ENCODE measurements at regions of chr3 and their contacts with region 1.

Region 1: GRCh38 chr3:149717391-149718056 is 34.8 kb downstream of the COMMD2 start:
- DNase-seq: no peak
- ATAC-seq: peak; percentile 87
- H3K4me3 ChIP-seq: no peak overlapping the region
- H3K27ac ChIP-seq: no peak overlapping the region
- H3K4me1 ChIP-seq: no peaks in the 10 kb centered on the region
- H3K27me3 ChIP-seq: no peaks in the 10 kb centered on the region
- CTCF ChIP-seq: peak; percentile 64 to 70 (median 66)
- EP300 ChIP-seq: no peak
- POLR2A ChIP-seq: no peak
- RAD21 ChIP-seq: peak; percentile 78

Region 2: DNA sequence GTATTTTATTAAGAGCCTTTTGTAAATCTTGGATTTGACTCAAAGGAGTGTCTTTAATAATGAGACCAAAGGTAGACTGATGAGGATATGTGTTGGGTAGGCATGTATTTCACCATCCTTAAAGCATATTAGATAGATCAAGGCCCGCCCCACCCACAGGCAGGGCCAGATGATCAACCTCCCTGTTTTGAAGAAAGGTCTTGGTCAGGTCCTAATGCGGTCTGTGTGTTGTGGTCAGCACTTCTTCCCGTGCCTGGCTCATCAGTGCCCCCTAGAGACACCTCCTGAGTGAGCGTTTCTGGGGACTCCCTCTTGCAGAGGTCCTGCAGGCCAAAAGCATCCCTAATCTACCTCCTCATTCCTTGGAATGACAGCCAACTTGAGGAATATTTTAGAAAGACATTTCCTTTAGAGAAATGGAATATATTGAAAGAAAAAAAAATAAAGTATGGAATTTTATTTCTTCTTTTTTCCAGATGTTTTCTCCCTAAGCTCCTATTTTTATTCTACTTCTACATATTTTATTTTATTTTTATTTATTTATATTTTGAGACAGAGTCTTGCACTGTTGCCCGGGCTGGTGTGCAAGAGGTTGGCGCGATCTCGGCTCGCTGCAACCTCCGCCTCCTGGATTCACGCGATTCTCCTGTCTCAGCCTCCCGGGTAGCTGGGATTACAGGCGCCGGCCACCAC is 237.1 kb before region 1 on chr3:
- CTCF ChIA-PET with region 1: no interaction called
- POLR2A ChIA-PET with region 1: no interaction called
- RAD21 ChIA-PET with region 1: no interaction called
- SMC1A ChIA-PET with region 1: no interaction called
- in situ Hi-C with region 1: no loop called
- intact Hi-C with region 1: no loop called
- DNase-seq: peak; percentile 52
- ATAC-seq: peak; percentile 99
- H3K4me3 ChIP-seq: no peak overlapping the region
- H3K27ac ChIP-seq: no peak overlapping the region
- H3K4me1 ChIP-seq: no peaks in the 10 kb centered on the region
- H3K27me3 ChIP-seq: no peaks in the 10 kb centered on the region
- CTCF ChIP-seq: peak; percentile 86 to 95 (median 93)
- EP300 ChIP-seq: no peak
- POLR2A ChIP-seq: no peak
- RAD21 ChIP-seq: peak; percentile 97

Region 3: GRCh38 chr3:149512209-149512782 is 205.2 kb before region 1 on chr3:
- CTCF ChIA-PET with region 1: interaction called, 39 read pairs
- POLR2A ChIA-PET with region 1: interaction called, 3 read pairs
- RAD21 ChIA-PET with region 1: interaction called, 3 read pairs
- SMC1A ChIA-PET with region 1: interaction called, 9 read pairs
- in situ Hi-C with region 1: no loop called
- intact Hi-C with region 1: loop called (anchors 1 kb)
- DNase-seq: no peak
- ATAC-seq: peak; percentile 92
- H3K4me3 ChIP-seq: no peak overlapping the region
- H3K27ac ChIP-seq: no peak overlapping the region
- H3K4me1 ChIP-seq: no peaks in the 10 kb centered on the region; the same call in 1 of the 2 replicates
- H3K27me3 ChIP-seq: no peaks in the 10 kb centered on the region
- CTCF ChIP-seq: peak; percentile 81 to 85 (median 84); a peak in 5 of 6 replicates
- EP300 ChIP-seq: no peak
- POLR2A ChIP-seq: no peak
- RAD21 ChIP-seq: peak; percentile 93

Region 4: DNA sequence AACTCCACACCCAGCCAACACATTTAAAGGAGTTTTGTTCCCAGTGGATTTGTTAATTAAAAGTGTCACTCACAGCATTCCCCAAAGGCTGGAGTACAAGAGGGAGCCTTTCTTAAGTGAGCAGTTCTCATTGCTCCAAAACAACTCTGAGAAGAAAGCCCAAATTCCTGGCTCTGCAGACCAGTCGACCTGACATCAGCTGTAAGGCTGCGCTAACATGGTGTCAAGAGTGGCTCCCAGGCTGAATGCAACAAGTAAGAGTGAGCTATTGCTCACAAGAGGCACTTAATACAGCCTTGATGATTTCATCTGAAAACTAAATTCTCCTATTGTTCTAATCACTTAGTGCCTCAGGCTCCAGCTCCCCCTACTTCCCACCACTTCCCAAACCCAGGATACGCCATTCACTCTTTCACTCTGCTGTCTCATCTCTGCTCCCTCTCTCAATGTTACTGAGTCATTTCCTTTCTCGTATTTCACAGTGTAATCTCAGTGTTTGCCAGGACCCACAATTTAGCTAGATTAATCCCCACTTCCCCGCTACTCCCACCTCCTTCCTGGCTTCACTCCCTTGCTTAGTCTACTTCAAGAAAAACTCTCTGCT is 141.5 kb before region 1 on chr3:
- CTCF ChIA-PET with region 1: interaction called, 253 read pairs
- POLR2A ChIA-PET with region 1: interaction called, 4 read pairs
- RAD21 ChIA-PET with region 1: interaction called, 122 read pairs
- SMC1A ChIA-PET with region 1: interaction called, 231 read pairs
- in situ Hi-C with region 1: no loop called
- intact Hi-C with region 1: no loop called
- DNase-seq: no peak
- ATAC-seq: peak; percentile 51
- H3K4me3 ChIP-seq: peak overlapping the region; percentile 10; the same call in 1 of the 2 replicates
- H3K27ac ChIP-seq: peak overlapping the region; percentile 70
- H3K4me1 ChIP-seq: peaks cover 59% of the 10 kb centered on the region
- H3K27me3 ChIP-seq: no peaks in the 10 kb centered on the region
- CTCF ChIP-seq: no peak
- EP300 ChIP-seq: 0 out of 4 replicates have a peak, but pooled peaks of 1 of the 2 experiments have one; percentile 35
- POLR2A ChIP-seq: no peak
- RAD21 ChIP-seq: no peak

Region 5: GRCh38 chr3:149609595-149609994 is 107.9 kb before region 1 on chr3:
- CTCF ChIA-PET with region 1: interaction called, 11 read pairs
- POLR2A ChIA-PET with region 1: no interaction called
- RAD21 ChIA-PET with region 1: interaction called, 6 read pairs
- SMC1A ChIA-PET with region 1: interaction called, 14 read pairs
- in situ Hi-C with region 1: no loop called
- intact Hi-C with region 1: no loop called
- DNase-seq: peak; percentile 81
- ATAC-seq: peak; percentile 97
- H3K4me3 ChIP-seq: no peak overlapping the region
- H3K27ac ChIP-seq: no peak overlapping the region
- H3K4me1 ChIP-seq: peaks cover 16% of the 10 kb centered on the region
- H3K27me3 ChIP-seq: no peaks in the 10 kb centered on the region
- CTCF ChIP-seq: no peak
- EP300 ChIP-seq: peak; percentile 62
- POLR2A ChIP-seq: no peak
- RAD21 ChIP-seq: no peak

Region 6: GRCh38 chr3:149702691-149703441 is 14.7 kb before region 1 on chr3:
- CTCF ChIA-PET with region 1: interaction called, 24 read pairs
- POLR2A ChIA-PET with region 1: no interaction called
- RAD21 ChIA-PET with region 1: interaction called, 5 read pairs
- SMC1A ChIA-PET with region 1: interaction called, 11 read pairs
- in situ Hi-C with region 1: no loop called
- intact Hi-C with region 1: no loop called
- DNase-seq: no peak
- ATAC-seq: peak; percentile 64
- H3K4me3 ChIP-seq: no peak overlapping the region
- H3K27ac ChIP-seq: no peak overlapping the region
- H3K4me1 ChIP-seq: no peaks in the 10 kb centered on the region
- H3K27me3 ChIP-seq: no peaks in the 10 kb centered on the region
- CTCF ChIP-seq: no peak
- EP300 ChIP-seq: no peak
- POLR2A ChIP-seq: no peak
- RAD21 ChIP-seq: no peak

Region 7: GRCh38 chr3:149771652-149772271 is 54.2 kb after region 1 on chr3:
- CTCF ChIA-PET with region 1: interaction called, 43 read pairs
- POLR2A ChIA-PET with region 1: no interaction called
- RAD21 ChIA-PET with region 1: no interaction called
- SMC1A ChIA-PET with region 1: interaction called, 9 read pairs
- in situ Hi-C with region 1: no loop called
- intact Hi-C with region 1: no loop called
- DNase-seq: no peak
- ATAC-seq: peak; percentile 93
- H3K4me3 ChIP-seq: no peak overlapping the region
- H3K27ac ChIP-seq: no peak overlapping the region
- H3K4me1 ChIP-seq: no peaks in the 10 kb centered on the region
- H3K27me3 ChIP-seq: no peaks in the 10 kb centered on the region; a peak in 1 of 4 replicates
- CTCF ChIP-seq: peak; percentile 79 to 83 (median 79)
- EP300 ChIP-seq: no peak
- POLR2A ChIP-seq: no peak
- RAD21 ChIP-seq: peak; percentile 72